ENCODE measurements at regions of chr6 and their contacts with region 1.

Region 1: DNA sequence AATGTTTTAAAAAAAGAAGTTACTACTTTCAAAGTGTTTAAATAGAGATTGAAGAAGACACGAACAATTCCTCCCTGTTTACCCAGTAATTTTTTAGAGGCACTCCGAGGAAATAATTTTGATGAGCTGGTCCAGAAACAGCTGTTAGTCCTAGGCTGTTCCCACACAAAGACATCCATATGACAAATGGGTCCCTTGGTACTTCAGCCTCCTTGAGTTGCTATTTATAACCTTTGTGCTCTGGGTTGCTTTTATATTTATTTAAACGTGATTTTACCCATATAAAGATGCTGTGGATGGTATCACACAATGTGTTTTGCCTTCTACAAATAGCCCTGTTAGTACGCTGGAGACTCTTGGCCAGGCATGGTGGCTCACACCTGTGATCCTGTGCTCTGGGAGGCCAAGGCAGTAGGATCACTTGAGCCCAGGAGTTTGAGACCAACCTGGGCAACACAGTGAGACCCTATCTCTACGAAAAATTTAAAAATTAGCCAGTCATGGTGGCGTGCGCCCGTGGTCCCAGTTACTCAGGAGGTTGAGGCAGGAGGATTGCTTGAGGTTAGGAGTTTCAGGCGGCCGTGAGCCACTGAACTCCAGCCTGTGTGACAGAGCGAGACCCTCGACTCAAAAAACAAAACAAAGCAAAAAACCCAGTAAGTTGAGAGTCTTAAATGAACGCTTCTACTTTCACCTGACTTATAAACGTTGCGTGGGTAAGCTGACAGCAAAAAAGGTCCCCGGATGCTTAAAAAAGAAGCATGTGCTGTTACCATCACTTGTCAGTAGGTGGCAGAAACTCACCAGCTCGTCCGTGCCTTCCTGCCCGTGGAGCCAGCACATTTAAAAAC is 56.9 kb upstream of the ARMH2 start:
- DNase-seq: peak; percentile 77
- H3K4me3 ChIP-seq: no peak overlapping the region
- H3K27ac ChIP-seq: peak overlapping the region in 1 of 4 donors; percentile 27
- H3K4me1 ChIP-seq: peaks cover 0 to 11% (median 4%) of the 10 kb centered on the region in 4 donors
- H3K27me3 ChIP-seq: no peaks in the 10 kb centered on the region
- CTCF ChIP-seq: peak; percentile 69 to 85 (median 80)
- EP300 ChIP-seq: no peak
- POLR2A ChIP-seq: no peak

Region 2: DNA sequence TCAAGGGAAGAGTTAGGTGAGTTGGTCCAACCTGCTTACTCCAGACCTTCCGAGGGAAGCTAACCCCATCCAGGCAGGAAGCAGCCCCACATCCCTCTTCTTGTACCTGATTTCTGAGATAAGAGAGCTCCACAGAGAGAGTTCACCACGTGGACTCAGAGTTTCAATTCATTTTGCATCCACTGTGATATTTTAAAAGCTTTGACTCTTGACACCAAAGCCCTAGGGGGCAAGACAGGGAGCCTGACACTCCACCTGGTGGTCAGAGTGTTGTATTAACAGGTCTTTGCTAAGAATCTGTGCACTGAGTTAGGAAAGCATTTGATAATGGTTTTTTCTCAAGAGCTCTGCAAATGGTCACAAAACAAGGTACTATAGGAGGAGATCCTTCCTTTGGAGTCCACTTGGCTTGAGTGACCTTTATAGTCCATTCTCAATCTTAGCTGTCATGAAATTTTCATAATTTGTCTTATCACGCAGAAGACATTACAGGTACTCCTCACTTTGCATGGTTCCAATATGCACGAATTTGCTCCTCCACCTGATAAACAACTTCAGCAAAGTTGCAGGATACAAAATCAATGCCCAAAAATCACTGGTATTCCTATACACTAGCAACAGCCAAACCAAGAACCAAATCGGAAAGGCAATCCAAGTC is 136.3 kb after region 1 on chr6:
- intact Hi-C with region 1: loop called (anchors 2 kb)
- DNase-seq: no peak
- H3K4me3 ChIP-seq: no peak overlapping the region
- H3K27ac ChIP-seq: no peak overlapping the region
- H3K4me1 ChIP-seq: peaks cover 0 to 6% (median 2%) of the 10 kb centered on the region in 4 donors
- H3K27me3 ChIP-seq: no peaks in the 10 kb centered on the region
- CTCF ChIP-seq: peak; percentile 13 to 59 (median 48)
- EP300 ChIP-seq: no peak
- POLR2A ChIP-seq: no peak

Region 3: DNA sequence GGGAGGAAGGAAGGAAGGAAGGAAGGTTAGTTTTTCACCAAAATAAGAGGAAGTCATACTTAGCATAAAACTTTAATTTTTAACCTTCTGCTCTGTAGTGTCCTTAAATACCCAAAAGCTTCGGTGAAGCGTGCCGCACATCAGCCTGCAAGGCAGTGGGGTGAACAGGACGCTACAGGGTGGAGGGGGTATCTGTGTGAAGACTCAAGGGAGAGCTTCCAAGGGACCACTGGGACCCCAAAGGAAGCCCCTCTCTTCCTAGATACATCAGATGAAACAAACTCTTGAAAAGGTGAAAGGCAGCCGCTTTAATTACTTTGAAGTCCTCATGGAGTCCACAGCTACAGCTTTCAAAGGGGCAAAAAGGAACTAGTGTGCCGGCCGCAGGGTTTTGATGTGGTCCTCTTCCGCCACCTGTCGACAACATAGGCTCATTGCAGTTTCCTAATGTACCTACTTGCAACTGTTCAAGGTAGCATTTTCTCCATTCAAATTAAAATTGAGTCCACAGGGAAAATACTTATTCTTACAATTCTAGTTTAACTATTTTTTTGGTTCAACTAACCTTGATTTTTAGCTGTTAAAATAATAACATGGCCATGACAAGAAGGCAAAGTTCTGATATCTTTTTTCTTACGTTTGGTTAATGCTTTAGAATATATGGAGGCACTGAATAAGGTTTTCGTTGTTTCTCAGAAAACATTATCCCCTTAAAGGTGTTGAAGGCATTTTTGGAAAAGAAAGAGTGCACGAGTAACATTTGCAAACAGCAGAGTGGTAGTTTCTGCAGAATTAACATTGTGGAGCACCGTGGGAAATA is 215.1 kb after region 1 on chr6:
- intact Hi-C with region 1: loop called (anchors 1 kb)
- DNase-seq: peak; percentile 88
- H3K4me3 ChIP-seq: no peak overlapping the region
- H3K27ac ChIP-seq: no peak overlapping the region
- H3K4me1 ChIP-seq: no peaks in the 10 kb centered on the region
- H3K27me3 ChIP-seq: no peaks in the 10 kb centered on the region
- CTCF ChIP-seq: peak; percentile 71 to 88 (median 87)
- EP300 ChIP-seq: no peak
- POLR2A ChIP-seq: no peak